Heart right ventricle (tissue), 16 donors: ENCODE measurements at regions of chr1 and their contacts with region 1.

Region 1: DNA sequence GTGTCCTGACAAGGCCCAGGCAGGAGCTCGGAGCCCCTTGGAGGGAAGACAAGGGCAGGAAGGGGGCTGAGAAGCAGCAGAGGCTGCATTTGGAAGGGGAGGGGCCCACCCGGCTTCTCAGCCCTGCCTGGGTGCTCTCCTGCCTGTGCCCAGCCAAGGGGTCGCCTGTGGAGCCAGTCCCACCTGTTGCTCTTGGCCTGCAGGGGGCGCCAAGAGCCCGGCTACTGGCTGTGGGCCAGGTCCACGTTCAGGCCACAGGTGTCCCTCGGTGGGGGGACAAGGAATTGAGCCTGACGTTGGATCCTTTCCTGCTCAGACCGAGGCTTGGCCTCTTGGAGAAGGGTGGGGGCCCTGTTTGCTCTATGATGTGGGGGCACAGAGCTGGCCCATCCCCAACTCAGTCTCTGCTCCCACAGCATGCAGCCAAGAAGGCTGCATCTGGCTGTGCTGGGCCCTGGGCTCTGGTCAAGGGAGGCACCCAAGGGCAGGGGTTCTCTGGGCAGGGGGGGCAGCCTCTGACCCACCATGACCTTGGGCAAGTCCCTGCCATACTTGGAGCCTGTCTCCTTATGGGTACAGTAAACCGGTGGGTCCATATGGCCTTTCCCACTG is 10.9 kb downstream of the WNT4 start:
- DNase-seq: no peak
- ATAC-seq: peak in 3 of 8 donors; percentile 31 to 36 (median 35)
- H3K4me3 ChIP-seq: no peak overlapping the region
- H3K27ac ChIP-seq: no peak overlapping the region
- H3K4me1 ChIP-seq: peaks cover 0 to 8% (median 4%) of the 10 kb centered on the region in 9 donors
- H3K27me3 ChIP-seq: peaks cover 0 to 37% (median 10%) of the 10 kb centered on the region in 7 donors
- CTCF ChIP-seq: peak; percentile 18 to 79 (median 67)

Region 2: GRCh38 chr1:22406742-22407472 is 274.9 kb after region 1 on chr1:
- intact Hi-C with region 1: loop called in 3 of 10 experiments (anchors 10 kb)
- DNase-seq: no peak
- ATAC-seq: no peak
- H3K4me3 ChIP-seq: no peak overlapping the region
- H3K27ac ChIP-seq: no peak overlapping the region
- H3K4me1 ChIP-seq: no peaks in the 10 kb centered on the region
- H3K27me3 ChIP-seq: peaks cover 0 to 47% (median 34%) of the 10 kb centered on the region in 7 donors
- CTCF ChIP-seq: no peak